Panc1 (cell line): ENCODE measurements at regions of chr7 and their contacts with region 1.

Region 1: DNA sequence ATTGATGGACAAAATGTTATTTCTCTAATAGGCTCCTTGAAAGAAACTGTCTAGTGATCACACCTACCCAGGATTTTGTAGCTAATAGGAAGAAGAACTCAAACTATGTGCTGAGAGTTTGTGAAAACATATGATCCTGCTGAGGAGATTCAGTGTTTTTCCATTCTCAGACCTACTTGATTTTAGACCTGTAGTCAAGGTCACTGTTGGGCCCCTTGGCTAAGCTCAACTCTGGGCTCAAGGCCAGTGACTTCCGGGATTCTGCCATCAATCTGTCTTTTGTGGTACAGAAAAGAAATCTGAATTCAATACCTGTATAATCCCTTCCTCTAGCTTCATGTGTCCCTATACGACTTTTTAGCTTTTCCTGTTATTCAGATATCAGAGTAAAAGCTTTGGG is 79.7 kb upstream of the FERD3L start:
- DNase-seq: no peak
- ATAC-seq: no peak
- H3K4me3 ChIP-seq: no peak overlapping the region
- H3K27ac ChIP-seq: no peak overlapping the region
- H3K4me1 ChIP-seq: no peaks in the 10 kb centered on the region
- H3K27me3 ChIP-seq: no peaks in the 10 kb centered on the region
- CTCF ChIP-seq: no peak

Region 2: DNA sequence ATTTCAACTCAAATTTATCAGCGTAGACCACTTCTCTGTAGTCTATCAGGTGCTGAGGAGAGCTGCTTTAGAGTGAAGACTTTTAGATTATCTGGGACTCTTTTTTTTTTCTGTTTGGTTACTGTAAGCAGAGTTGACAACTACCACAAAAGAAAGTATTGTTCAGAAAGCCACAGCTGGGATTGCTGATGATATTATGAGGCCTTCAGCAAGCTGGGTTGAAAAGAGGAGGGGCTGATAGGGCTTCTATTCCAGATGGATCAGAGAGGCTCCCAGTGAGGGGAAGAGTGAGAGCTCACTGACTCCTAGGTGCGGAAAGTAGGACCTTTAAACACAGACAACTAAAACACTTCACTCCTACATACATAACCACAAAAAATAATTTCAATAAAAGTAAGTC is 108.8 kb after region 1 on chr7:
- CTCF ChIA-PET with region 1: interaction called, 11 read pairs
- POLR2A ChIA-PET with region 1: interaction called, 3 read pairs
- in situ Hi-C with region 1: no loop called
- intact Hi-C with region 1: no loop called
- DNase-seq: no peak
- ATAC-seq: no peak
- H3K4me3 ChIP-seq: no peak overlapping the region
- H3K27ac ChIP-seq: no peak overlapping the region
- H3K4me1 ChIP-seq: no peaks in the 10 kb centered on the region
- H3K27me3 ChIP-seq: no peaks in the 10 kb centered on the region
- CTCF ChIP-seq: no peak